ENCODE measurements at regions of chr7 and their contacts with region 1.

Region 1: GRCh38 chr7:25179771-25180591 is 48.3 kb downstream of the NPVF start:
- DNase-seq: peak; percentile 71
- H3K4me3 ChIP-seq: peak overlapping the region; percentile 53 to 73 (median 72)
- H3K27ac ChIP-seq: no peak overlapping the region
- H3K4me1 ChIP-seq: peaks cover 7% of the 10 kb centered on the region
- H3K27me3 ChIP-seq: no peaks in the 10 kb centered on the region
- CTCF ChIP-seq: peak; percentile 38 to 77

Region 2: DNA sequence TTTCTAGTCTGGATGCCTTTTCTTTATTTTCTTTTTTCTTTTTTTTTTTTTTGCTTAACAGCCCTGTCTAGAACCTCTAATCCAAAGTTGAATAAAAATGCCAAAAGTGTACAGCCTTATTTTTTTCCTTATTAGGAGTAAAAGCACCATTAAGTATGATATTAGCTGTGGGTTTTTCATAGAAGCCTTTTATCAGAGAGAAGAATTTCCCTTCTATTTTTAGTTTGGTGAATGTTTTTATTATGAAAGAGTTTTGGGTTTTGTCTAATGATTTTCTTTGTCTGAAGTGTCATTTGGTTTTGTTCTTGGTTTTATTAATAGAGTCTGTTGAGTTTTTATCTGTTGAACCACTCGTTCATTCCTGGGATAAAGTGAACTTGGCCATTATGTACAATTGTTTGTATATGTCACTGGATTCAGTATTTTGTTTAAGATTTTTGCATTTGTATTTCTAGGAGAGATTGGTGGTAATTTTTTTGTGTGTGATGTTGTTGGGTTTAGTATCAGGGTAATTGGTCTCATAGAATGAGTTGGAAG is 557.3 kb before region 1 on chr7:
- CTCF ChIA-PET with region 1: interaction called, 15 read pairs
- dilution Hi-C with region 1: no loop called
- in situ Hi-C with region 1: no loop called
- intact Hi-C with region 1: no loop called
- DNase-seq: no peak
- H3K4me3 ChIP-seq: no peak overlapping the region
- H3K27ac ChIP-seq: no peak overlapping the region
- H3K4me1 ChIP-seq: no peaks in the 10 kb centered on the region
- H3K27me3 ChIP-seq: no peaks in the 10 kb centered on the region
- CTCF ChIP-seq: no peak

Region 3: GRCh38 chr7:25216837-25217236 is 36.9 kb after region 1 on chr7:
- CTCF ChIA-PET with region 1: no interaction called
- dilution Hi-C with region 1: no loop called
- in situ Hi-C with region 1: no loop called
- intact Hi-C with region 1: loop called (anchors 2 kb)
- DNase-seq: peak; percentile 20
- H3K4me3 ChIP-seq: no peak overlapping the region
- H3K27ac ChIP-seq: no peak overlapping the region
- H3K4me1 ChIP-seq: no peaks in the 10 kb centered on the region
- H3K27me3 ChIP-seq: peaks cover 5% of the 10 kb centered on the region
- CTCF ChIP-seq: peak; percentile 69 to 86